Ovary (tissue), 10 donors: ENCODE measurements at regions of chr16 and their contacts with region 1.

Region 1: GRCh38 chr16:68237243-68238028 is 1.5 kb upstream of the ESRP2 start:
- DNase-seq: peak; percentile 97 to 99 (median 98)
- H3K4me3 ChIP-seq: peak overlapping the region; percentile 61
- H3K27ac ChIP-seq: peak overlapping the region in 1 of 2 donors; percentile 27
- H3K4me1 ChIP-seq: peaks cover 12% of the 10 kb centered on the region
- H3K27me3 ChIP-seq: no peaks in the 10 kb centered on the region
- CTCF ChIP-seq: peak in 1 of 3 donors; percentile 35
- EP300 ChIP-seq: peak; percentile 26
- POLR2A ChIP-seq: peak; percentile 47

Region 2: DNA sequence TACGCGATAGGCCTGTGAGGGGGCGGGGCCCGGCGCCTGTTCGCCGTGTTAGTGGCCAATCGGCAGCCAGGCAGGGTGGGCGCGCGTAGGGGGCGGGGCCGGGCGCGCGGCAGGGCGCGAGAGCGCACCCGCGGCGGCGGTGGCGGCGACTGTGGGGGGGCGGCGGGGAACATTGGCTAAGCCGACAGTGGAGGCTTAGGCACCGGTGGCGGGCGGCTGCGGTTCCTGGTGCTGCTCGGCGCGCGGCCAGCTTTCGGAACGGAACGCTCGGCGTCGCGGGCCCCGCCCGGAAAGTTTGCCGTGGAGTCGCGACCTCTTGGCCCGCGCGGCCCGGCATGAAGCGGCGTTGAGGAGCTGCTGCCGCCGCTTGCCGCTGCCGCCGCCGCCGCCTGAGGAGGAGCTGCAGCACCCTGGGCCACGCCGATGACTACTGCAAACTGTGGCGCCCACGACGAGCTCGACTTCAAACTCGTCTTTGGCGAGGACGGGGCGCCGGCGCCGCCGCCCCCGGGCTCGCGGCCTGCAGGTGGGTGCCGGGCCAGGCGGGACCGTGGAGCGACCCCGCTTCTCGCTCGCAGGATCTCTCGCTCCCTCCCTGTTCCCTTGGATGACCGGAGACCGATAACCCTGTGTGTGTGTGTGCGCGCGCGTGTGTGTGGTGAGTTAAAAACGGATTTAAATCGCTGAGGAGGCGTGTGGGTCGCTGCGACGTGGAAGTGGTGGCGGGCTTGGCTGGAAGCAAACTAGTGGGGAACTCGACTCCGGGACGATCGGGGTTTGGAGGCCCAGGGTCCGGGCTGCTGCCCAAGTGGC is 152.0 kb before region 1 on chr16 and contains the start of gene NFATC3:
- intact Hi-C with region 1: loop called in 2 of 4 experiments (anchors 10 kb)
- DNase-seq: peak; percentile 98 to 99 (median 99)
- H3K4me3 ChIP-seq: peak within 1 kb of the TSS; percentile 72
- H3K27ac ChIP-seq: peak within 1 kb of the TSS; percentile 88 to 97
- H3K4me1 ChIP-seq: peaks cover 4% of the 10 kb centered on the region
- H3K27me3 ChIP-seq: no peaks in the 10 kb centered on the region
- CTCF ChIP-seq: peak in 2 of 3 donors; percentile 10 to 16
- EP300 ChIP-seq: no peak
- POLR2A ChIP-seq: no peak
- total RNA-seq, gene NFATC3: 32.4 to 77.1 (median 48.2) TPM

Region 3: GRCh38 chr16:68093816-68094613 is 143.4 kb before region 1 on chr16:
- intact Hi-C with region 1: loop called in 2 of 4 experiments (anchors 10 kb)
- DNase-seq: no peak
- H3K4me3 ChIP-seq: no peak overlapping the region
- H3K27ac ChIP-seq: no peak overlapping the region
- H3K4me1 ChIP-seq: no peaks in the 10 kb centered on the region
- H3K27me3 ChIP-seq: no peaks in the 10 kb centered on the region
- CTCF ChIP-seq: peak in 1 of 3 donors; percentile 20
- EP300 ChIP-seq: no peak
- POLR2A ChIP-seq: no peak

Region 4: DNA sequence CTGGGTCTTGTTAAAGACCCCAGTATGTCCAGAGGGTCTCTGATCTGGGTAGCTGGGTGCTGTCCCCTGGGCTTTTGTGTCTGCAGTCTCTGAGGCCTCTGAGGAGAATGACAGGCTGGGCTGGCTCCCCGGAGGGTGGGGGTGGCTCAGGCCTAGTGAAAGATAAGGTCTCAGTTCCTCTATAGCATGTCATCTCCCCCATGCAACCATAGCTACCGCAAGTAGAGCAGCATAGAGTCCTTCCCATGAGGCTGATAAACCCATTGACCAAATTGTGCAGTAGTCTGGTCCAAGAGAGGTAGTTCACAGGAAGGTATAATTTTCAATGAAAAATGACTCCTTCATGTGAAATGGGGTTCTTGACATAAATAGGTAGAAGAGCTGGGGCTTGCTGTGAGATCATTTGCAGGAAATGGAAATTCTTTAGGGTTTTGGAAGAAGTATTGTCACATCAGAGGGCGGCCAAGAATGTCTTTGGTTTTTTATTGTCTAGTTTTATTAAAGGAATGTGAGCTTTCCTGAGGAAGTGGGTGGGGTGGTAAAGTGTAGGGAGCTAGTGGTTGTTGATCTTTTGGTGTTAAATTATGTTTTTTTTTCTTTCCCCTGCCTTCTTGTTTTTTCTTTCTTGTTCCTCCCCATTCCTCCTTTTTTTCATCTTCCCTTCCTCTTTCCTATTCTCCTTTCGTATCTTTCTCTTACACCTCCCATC is 52.3 kb after region 1 on chr16:
- intact Hi-C with region 1: no loop called
- DNase-seq: no peak
- H3K4me3 ChIP-seq: no peak overlapping the region
- H3K27ac ChIP-seq: no peak overlapping the region
- H3K4me1 ChIP-seq: no peaks in the 10 kb centered on the region
- H3K27me3 ChIP-seq: no peaks in the 10 kb centered on the region
- CTCF ChIP-seq: no peak
- EP300 ChIP-seq: no peak
- POLR2A ChIP-seq: no peak